Activated T-helper 1 cell treated with anti-CD3 and anti-CD28 coated beads, Interleukin-12 subunit alpha, Interleukin-12 subunit beta, Interleukin-2, Interleukin-4 antibody, amounts not matched to agents 30 ng/mL and 10 ng/mL and 1 ng/mL, durations not matched to agents 14 hours and 24 hours and 36 hours (primary cell): ENCODE measurements at regions of chr12 and their contacts with region 1.

Region 1: DNA sequence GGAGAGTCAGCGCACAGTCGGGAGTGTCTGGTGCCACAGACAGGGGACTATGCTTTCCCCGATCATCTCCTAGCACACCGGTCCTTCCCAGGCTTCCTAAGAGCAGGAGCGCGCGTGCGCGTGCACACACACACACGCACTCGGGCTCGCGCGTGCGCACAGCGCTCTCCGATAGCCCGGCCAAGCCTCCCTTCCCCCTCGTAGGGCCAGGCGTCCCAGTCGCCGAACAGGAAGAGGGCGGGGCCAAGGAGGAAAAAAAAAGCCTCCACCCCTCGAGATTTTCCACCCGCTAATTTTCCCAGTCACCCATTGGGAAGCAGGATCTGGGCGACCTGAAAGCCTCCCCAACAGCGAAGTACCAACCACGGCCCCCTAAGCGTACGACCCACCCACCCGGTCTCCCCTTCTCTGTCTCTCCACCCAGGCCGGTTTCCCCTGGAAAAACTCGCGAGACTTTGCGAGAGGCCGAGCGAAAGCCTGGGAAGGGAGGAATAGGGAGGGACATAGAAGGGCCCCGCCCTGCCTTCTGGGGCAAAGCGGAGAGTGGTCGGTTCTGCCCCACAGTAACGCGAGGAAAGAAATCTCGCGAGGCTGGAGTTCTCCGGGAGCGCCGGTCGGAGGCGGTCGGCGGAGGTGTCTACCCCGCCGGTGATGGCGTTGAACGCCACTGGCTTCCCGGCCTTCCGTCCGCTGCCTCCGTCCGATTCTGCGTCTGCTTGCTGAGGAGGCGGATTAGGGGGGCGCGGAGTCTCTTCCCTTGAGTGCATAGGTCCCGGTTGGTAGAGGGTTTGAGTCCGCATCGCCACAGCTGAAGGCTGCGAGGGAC is at the starts of genes FGFR1OP2 and INTS13:
- DNase-seq: peak; percentile 97
- H3K4me3 Mint-ChIP-seq: peak within 1 kb of the TSS; percentile 96
- H3K27ac Mint-ChIP-seq: peak within 1 kb of the TSS; percentile 96
- H3K4me1 Mint-ChIP-seq: peaks cover 82% of the 10 kb centered on the region
- H3K27me3 Mint-ChIP-seq: no peaks in the 10 kb centered on the region
- total RNA-seq, gene FGFR1OP2: 48.3 and 49.9 TPM in 2 replicates
- total RNA-seq, gene INTS13: 43.8 and 52.2 TPM in 2 replicates

Region 2: DNA sequence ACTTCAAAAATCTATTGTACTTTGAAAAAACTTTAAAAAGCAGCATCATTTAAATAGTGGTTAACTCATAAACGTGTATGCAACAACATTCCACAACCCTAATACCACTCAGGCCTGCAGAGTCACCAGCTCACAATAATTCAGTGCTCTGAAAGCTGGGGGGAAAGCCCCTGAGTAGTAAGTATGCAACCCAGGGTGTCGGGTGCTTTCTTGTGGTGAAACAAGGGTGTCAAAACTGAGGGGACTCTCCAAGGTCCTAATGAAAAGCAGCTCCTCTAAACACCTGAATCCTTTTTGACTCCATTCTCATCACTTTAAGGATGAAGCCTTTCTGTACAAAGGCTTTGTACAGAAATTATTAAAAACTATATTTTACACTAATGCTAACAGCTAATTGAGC is 33.9 kb after region 1 on chr12:
- intact Hi-C with region 1: loop called (anchors 1 kb)
- DNase-seq: peak; percentile 60
- H3K4me3 Mint-ChIP-seq: peak overlapping the region; percentile 24
- H3K27ac Mint-ChIP-seq: peak overlapping the region; percentile 74
- H3K4me1 Mint-ChIP-seq: peaks cover 24% of the 10 kb centered on the region
- H3K27me3 Mint-ChIP-seq: no peaks in the 10 kb centered on the region

Region 3: GRCh38 chr12:27142101-27142721 is 204.1 kb after region 1 on chr12:
- intact Hi-C with region 1: loop called (anchors 5 kb)
- DNase-seq: peak; percentile 16
- H3K4me3 Mint-ChIP-seq: no peak overlapping the region
- H3K27ac Mint-ChIP-seq: no peak overlapping the region
- H3K4me1 Mint-ChIP-seq: peaks cover 31% of the 10 kb centered on the region
- H3K27me3 Mint-ChIP-seq: no peaks in the 10 kb centered on the region

Region 4: GRCh38 chr12:27185234-27186021 is 247.3 kb after region 1 on chr12:
- intact Hi-C with region 1: loop called (anchors 2 kb)
- DNase-seq: peak; percentile 58
- H3K4me3 Mint-ChIP-seq: peak overlapping the region; percentile 1
- H3K27ac Mint-ChIP-seq: peak overlapping the region; percentile 61
- H3K4me1 Mint-ChIP-seq: peaks cover 40% of the 10 kb centered on the region
- H3K27me3 Mint-ChIP-seq: no peaks in the 10 kb centered on the region